OCI-LY7 (cell line): ENCODE measurements at regions of chr19 and their contacts with region 1.

Region 1: DNA sequence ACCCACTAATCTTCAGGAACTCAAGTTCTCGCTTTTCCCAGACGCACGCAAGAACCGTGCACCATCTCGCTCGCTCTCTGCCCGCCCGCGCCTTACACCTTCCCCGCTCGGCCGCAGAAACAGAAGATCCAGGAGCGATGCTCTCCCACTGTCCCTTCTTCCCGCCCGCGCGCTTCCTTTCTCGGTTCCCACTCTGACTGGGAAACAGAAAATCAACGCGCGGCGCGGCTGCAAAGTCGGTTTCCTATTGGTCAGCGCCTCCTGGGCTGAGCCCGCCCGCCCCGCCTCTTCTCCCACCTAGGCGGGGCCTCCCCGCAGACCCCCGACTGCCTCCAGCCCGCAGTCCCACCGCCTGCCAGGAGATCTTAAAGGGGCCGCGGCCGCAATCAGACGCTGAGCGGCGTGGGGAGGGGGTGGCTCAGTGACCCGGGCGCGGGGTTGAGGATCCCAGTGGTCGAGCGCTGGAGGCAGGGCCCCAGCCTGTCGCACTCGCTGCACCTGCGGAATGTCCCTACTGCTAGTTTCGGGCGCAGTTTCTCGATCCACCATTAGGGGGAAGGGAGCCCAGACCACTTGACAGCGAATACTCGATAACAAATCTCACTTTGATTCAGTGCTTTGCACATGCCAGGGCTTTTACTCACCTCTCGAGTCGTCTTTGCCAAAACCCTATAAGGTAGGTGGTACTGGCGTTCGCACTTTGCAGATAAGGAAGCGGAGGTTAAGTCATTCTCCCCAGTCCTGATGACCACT is 685 bp upstream of the SLC25A23 start:
- DNase-seq: peak; percentile 100
- H3K4me3 ChIP-seq: peak overlapping the region; percentile 89
- H3K27ac ChIP-seq: peak overlapping the region; percentile 62
- H3K4me1 ChIP-seq: peaks cover 20% of the 10 kb centered on the region
- CTCF ChIP-seq: peak; percentile 85

Region 2: DNA sequence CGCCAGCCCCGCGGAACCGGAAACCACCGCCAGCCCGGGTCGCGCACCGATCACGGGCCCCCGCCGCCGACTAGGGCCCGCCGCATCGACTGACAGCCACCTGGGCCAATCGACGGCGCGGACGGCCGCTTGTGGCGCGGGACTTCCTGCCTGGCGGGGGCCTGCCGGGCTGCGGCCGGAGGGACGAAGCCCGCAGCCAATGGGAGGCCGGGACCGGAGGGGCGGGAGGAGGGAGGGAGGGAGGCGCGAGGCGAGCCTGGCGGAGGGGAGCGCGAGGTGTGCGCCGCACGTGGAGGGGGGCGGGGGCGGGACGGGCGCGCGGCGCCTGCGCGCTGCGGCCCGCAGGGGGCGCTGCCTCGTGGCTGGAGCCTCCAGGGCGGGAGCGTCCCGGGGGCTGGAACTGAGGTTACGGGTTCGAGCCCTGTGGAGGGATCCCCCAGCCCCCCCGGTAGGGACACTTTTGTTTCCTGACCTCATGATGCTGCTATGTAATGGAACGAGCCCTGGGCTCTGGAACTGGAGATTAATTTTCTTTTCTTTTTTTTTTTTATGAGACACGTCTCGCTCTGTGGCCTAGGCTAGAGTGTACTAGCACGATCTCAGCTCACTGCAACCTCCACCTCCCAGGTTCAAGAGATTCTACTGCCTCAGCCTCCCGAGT is 180.2 kb before region 1 on chr19 and contains the start of gene MLLT1:
- CTCF ChIA-PET with region 1: no interaction called
- POLR2A ChIA-PET with region 1: no interaction called
- intact Hi-C with region 1: loop called (anchors 1 kb)
- DNase-seq: peak; percentile 97
- H3K4me3 ChIP-seq: peak within 1 kb of the TSS; percentile 86
- H3K27ac ChIP-seq: peak within 1 kb of the TSS; percentile 18
- H3K4me1 ChIP-seq: peaks cover 23% of the 10 kb centered on the region
- CTCF ChIP-seq: peak; percentile 78
- total RNA-seq, gene MLLT1: 14.3 and 17.5 TPM in 2 replicates

Region 3: DNA sequence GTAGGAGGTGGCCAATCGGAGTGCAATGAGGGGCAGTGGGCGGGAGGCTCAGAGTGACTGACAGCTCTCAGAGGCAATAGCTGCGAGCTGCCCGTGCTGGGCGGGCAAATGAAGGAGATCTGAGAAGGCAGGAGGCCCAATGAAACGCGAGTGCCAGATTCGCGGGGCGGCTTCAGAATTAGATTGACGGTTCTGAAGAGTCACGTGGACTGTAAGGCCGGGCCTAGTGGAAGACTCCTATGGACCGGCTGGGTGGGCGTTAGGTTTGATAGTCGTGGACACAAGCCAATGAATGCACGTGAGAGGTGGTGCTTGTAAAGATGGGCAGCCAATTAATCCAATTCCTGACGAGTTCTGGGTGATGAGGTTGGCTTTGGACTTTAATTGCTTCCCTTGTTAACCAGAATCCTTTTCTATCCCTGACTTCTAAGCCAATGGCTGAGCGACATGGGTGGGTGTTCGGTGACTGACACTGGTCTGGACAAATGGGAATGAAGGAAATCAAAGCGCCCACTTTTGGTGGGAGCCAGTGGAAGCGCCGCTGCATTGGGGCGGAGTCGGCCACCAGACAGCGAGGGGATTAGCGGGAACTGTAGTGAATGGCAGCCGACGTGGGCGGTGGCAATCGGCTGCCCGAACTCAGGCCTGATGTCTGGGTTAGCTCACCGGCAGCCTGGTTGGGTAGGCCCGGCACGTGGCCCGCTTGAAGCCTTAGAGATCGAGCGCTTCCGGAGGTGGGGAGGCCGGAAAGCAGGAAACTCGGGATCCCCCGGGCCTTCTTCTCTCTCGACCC is 35.1 kb before region 1 on chr19:
- CTCF ChIA-PET with region 1: no interaction called
- POLR2A ChIA-PET with region 1: interaction called, 3 read pairs
- intact Hi-C with region 1: loop called (anchors 2 kb)
- DNase-seq: peak; percentile 100
- H3K4me3 ChIP-seq: peak overlapping the region; percentile 40
- H3K27ac ChIP-seq: peak overlapping the region; percentile 48
- H3K4me1 ChIP-seq: peaks cover 26% of the 10 kb centered on the region
- CTCF ChIP-seq: no peak

Region 4: DNA sequence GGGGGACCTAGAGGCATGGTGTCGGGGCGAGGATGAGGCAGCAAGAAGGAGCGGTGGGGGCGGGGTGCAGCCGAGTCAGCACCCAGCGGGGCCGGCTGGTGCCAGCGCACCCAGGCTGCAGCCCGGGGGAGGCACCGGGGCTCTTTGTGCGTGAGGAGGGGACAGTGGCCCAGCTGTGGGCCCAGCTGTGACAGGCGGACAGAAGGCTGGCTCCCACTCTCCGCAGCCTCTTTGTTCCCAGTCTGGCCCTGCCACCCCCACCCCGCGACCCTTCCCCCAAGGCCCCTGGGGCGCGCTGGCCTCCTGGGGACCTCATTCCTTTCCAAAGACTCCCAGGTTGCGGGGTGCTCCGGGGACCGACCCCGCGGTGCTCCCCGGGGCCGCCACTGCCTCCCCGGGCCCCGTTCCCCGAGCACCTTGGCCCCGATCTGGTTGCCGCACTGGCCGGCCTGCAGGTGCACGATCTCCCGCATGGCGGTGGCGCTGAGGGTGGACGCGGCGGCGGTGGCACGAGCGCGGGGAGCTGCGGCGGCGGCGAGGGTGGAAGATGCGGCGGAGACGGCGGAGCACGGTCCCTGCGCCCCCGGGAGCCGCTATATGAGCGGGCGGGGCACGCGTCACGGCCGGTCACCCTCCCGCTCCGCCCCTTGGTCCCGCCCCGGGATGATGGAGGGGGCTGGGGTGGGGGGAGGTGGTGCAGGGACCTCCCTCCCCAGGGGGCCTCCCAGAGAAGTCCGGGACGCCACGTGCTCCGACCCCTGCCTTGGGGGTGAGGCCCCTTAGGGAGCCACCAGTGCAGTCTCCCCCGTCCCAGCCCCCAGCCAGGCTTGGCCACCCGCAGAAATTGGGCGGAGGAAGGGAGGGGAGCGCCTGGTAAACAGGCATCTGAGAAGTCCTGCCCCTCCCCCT is 41.7 kb after region 1 on chr19 and contains the start of gene TUBB4A:
- CTCF ChIA-PET with region 1: no interaction called
- POLR2A ChIA-PET with region 1: interaction called, 7 read pairs
- intact Hi-C with region 1: loop called (anchors 1 kb)
- DNase-seq: peak; percentile 84
- H3K4me3 ChIP-seq: peak within 1 kb of the TSS; percentile 74
- H3K27ac ChIP-seq: peak within 1 kb of the TSS; percentile 44
- H3K4me1 ChIP-seq: peaks cover 41% of the 10 kb centered on the region
- CTCF ChIP-seq: no peak
- total RNA-seq, gene TUBB4A: 9.7 and 14.4 TPM in 2 replicates

Region 5: GRCh38 chr19:6602729-6603114 is 142.4 kb after region 1 on chr19:
- CTCF ChIA-PET with region 1: no interaction called
- POLR2A ChIA-PET with region 1: no interaction called
- intact Hi-C with region 1: loop called (anchors 5 kb)
- DNase-seq: peak; percentile 87
- H3K4me3 ChIP-seq: peak overlapping the region; percentile 74
- H3K27ac ChIP-seq: peak overlapping the region; percentile 92
- H3K4me1 ChIP-seq: peaks cover 78% of the 10 kb centered on the region
- CTCF ChIP-seq: no peak